ENCODE measurements at regions of chr1 and their contacts with region 1.

Region 1: GRCh38 chr1:29230553-29231378 is at the start of gene MECR:
- DNase-seq: peak; percentile 96
- ATAC-seq: peak; percentile 98
- total RNA-seq, gene MECR: 33.1 TPM

Region 2: DNA sequence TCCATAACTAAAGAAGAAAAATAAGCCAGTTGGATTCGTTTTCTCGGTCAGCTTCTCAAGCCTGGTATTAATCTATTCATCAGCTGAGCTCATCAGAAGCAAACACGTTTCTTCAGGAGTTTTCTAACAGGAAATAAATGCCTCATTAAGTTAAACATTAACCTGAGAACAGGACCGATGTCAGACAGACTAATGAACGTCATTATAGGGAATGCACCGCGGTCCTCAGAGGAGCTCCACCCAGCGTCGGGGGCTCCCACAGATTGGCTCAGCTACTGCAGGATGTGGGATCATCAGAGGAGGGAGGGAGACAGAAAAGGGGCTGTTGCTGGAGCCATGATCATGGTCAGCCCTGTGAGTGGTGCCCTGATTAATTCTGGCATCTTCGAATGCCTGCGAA is 620.9 kb after region 1 on chr1:
- intact Hi-C with region 1: loop called (anchors 10 kb)
- DNase-seq: no peak
- ATAC-seq: no peak